Head of caudate nucleus (tissue), 42 donors: ENCODE measurements at regions of chr9 and their contacts with region 1.

Region 1: DNA sequence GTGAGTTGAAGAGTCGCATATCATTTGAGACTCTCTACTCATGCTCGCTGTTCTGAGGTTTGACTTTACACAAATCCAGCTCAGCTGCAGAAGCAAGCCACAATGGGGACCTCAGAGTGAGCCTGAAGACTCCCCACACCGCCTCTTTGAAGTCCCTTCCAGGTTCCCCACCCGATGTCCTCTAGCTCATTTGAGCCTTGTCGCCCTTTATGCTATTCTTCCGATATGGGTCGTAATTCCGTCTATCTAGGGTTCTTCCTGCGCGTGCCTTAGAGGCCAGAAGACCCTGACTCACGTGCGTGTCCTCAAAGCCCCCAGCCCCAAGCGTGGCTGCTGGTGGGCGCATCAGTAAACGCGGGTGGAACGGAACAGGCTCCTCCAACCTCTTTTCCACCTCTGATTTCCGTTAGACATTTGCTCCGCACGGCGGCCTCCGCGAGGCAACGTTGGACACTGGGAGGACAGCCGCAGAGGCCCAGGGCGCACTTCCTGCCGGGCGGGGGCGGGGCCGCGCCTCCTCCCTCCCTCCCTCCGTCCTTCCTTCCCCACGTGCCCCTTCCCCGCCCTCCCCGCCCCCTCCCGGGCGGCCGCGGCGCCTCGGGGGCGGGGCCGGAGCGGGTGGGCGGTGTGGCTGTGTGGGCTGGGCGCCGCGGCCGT is at the start of gene SNX30:
- DNase-seq: peak; percentile 74 to 96 (median 91)

Region 2: DNA sequence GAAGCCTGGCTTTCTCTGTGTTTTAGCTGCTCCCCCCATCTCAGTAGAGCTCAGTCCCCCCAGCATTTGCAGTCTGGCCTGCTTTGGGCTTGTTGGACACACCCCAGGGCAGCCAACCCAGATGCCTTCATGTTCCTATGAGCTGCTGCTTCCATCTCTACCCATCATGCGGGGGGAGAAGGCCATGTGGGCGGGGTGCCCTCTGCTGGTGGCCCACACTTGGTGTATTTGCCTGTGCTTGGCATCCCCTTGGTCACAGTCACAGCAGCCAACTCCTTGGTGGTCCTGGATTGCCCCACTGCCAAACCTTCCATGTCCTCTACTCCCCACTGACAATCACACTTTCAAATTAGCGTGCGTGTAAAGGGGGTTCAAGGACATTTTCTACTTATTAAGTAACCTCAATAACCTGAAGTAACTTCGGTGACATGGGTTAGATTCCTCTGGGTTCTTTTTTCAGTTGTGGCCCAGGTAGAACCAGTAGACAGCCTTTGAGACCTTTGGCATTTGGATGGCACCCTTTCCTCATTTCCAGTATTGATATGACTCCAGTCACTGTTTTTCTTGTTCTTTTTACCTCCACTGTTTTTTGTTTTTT is 43.1 kb after region 1 on chr9:
- intact Hi-C with region 1: loop called (anchors 5 kb)
- DNase-seq: peak; percentile 14 to 93 (median 78)

Region 3: DNA sequence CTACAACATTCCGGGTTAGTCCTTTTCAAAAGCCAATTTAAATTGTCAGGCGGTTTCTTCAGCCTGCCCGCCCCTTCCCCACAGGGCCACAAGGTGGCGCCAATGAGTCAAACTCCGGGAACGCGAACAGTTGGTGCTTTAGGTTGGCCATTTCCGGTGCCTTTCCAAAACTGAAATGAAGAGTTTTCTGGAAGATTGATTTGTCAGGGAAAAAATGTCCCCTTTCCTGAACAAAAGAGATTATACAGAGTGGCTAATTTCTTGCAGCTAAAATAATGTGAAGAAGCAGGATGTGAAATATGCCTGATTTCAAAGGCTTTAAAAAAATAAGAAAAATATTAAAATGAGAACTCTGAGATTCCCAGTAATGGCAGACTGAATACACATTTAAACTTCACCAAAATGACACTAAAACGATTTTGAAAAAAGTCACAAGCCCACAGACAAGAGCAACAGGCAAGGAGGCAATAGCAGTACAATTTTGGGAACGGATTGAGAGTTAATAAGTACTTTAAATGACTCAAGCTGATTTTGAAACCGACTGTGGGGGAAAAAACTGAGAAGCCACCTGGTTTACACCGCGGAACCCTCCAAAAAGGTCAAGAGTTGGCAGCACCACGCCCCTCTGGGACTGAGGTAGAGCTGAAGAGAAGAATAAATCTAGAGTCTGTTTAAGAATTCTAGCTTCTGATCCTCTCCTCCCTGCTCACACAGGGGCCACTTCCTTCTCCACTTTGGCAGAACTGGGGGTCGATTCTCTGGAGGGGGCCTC is 94.7 kb after region 1 on chr9:
- intact Hi-C with region 1: loop called (anchors 10 kb)
- DNase-seq: peak in 41 of 42 donors; percentile 54 to 93 (median 80)